Activated B cell treated with CpG ODN at 0.5 μM for 24 hours (primary cell): ENCODE measurements at regions of chr7 and their contacts with region 1.

Region 1: GRCh38 chr7:7719236-7719635 is 829 bp upstream of the RPA3 start:
- DNase-seq: no peak
- ATAC-seq: peak; percentile 90
- H3K4me3 Mint-ChIP-seq: no peak overlapping the region
- H3K27ac Mint-ChIP-seq: peak overlapping the region; percentile 61
- H3K4me1 Mint-ChIP-seq: peaks cover 17% of the 10 kb centered on the region
- H3K27me3 Mint-ChIP-seq: no peaks in the 10 kb centered on the region
- CTCF ChIP-seq: no peak

Region 2: DNA sequence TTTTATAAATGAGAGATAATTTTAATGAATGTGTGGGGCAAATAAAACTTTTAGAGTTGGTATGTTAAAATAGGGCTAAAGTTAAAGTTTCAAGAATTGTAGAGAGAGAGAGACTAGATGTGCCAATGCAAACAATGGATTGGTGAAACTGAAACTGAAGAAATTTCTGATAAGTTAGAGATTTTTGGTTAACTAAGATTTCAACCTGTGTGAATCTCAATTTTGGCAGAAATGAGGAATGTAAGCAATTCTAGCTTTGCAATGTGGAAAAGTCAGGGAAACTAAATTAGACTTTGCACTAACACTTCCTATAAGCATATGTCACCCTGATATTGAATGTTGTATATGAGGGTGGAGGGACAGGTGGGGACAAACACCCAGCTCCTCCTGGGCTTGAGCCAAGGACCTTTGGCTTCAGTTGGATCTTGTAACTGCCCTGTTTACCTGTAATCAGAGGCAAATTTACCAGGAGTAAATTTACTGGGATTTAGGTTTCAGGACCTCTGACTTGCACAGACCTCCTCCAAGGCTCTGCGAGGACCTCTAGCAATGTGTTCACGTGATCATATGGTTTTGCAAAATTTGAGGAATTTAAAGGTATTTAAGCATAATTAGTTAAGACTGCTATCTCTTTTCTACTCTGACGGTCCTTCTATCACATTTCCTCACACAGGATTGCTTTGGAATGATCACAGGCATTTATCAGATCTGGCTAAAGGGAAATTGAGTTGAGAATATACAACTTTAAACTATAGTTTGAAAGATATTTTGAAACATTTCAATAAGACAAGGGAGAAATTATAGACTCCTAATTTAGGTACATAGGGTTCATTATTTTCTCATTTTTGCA is 32.2 kb after region 1 on chr7:
- CTCF ChIA-PET with region 1: no interaction called
- POLR2A ChIA-PET with region 1: no interaction called
- intact Hi-C with region 1: loop called (anchors 5 kb)
- DNase-seq: no peak
- ATAC-seq: no peak
- H3K4me3 Mint-ChIP-seq: no peak overlapping the region
- H3K27ac Mint-ChIP-seq: no peak overlapping the region
- H3K4me1 Mint-ChIP-seq: peaks cover 8% of the 10 kb centered on the region
- H3K27me3 Mint-ChIP-seq: no peaks in the 10 kb centered on the region
- CTCF ChIP-seq: no peak